PC-3 (cell line): ENCODE measurements at regions of chr2 and their contacts with region 1.

Region 1: DNA sequence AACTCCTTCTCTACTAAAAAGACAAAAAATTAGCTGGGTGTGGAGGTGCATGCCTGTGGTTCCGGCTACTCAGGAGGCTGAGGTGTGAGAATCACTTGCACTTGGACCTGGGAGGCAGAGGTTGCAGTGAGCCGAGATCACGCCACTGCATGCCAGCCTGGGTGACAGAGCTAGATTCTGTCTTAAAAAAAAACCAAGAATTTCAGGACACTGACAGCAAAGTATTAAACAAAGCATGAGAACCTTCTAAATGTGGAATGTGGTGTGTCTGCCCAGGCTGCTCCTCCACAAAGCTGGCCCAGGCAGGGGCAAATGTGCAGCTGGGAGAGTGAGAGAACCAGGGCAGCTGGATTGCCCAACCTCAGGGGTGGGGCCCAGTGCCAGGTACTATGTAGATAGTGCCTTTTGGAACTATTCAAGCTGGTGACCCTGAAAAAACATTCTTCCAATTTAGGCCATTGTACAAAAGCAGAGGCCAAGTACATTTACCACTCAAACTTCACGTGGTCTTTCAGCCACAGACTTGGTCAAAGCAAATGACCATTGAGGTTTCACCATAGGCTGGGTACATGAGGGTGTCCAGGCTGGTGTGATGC is 6.7 kb upstream of the UGT1A5 start:
- DNase-seq: peak; percentile 45
- ATAC-seq: no peak
- H3K4me3 ChIP-seq: no peak overlapping the region
- H3K27ac ChIP-seq: peak overlapping the region; percentile 91
- H3K4me1 ChIP-seq: peaks cover 43% of the 10 kb centered on the region
- H3K27me3 ChIP-seq: no peaks in the 10 kb centered on the region
- CTCF ChIP-seq: no peak

Region 2: GRCh38 chr2:233375490-233376314 is 330.3 kb before region 1 on chr2:
- CTCF ChIA-PET with region 1: no interaction called
- POLR2A ChIA-PET with region 1: no interaction called
- intact Hi-C with region 1: no loop called
- DNase-seq: no peak
- ATAC-seq: no peak
- H3K4me3 ChIP-seq: no peak overlapping the region
- H3K27ac ChIP-seq: no peak overlapping the region
- H3K4me1 ChIP-seq: peaks cover 3% of the 10 kb centered on the region
- H3K27me3 ChIP-seq: no peaks in the 10 kb centered on the region
- CTCF ChIP-seq: no peak

Region 3: GRCh38 chr2:233553366-233553765 is 152.6 kb before region 1 on chr2:
- CTCF ChIA-PET with region 1: no interaction called
- POLR2A ChIA-PET with region 1: no interaction called
- intact Hi-C with region 1: loop called (anchors 5 kb)
- DNase-seq: no peak
- ATAC-seq: no peak
- H3K4me3 ChIP-seq: no peak overlapping the region
- H3K27ac ChIP-seq: no peak overlapping the region
- H3K4me1 ChIP-seq: peaks cover 31% of the 10 kb centered on the region
- H3K27me3 ChIP-seq: no peaks in the 10 kb centered on the region
- CTCF ChIP-seq: no peak

Region 4: DNA sequence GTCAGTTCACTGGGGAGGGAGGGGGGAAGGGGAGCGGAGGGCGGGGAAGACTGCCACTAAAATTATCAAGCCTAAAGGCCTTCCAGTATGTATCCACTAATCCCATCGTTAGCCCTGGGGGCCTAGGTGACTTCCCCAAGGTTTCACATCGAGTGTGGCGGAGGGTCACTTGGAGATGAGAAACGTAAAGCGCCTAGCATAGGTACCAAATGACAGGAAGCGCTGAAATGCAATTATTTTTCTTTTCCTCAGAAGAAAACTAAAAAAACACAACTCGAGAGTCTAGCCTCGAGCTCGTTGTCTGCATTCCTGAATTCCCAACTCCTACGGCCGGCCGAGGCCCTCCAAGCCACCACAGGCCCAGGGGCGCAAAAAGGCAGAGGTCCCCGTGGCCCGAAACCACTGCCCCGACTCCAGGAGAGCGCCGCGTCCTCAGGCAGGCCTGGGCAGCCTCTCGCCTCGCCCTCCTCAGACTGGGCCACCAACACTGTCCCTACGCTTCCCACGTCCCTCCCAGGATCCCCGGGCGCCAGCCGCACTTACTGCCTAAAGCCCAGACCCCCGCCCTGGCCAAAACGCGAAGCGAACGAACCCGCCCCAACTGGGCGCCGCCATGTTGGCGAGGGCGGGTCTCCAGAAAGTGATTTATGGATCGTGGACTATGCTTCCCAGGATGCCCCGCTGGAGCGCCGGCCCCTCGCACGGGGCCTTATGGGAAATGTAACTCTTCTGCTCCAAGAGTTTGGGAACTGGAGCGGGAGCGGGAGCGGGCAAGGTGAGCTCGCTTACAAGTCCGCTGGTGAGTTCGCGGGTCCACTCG is 139.7 kb before region 1 on chr2 and contains the start of gene USP40:
- CTCF ChIA-PET with region 1: no interaction called
- POLR2A ChIA-PET with region 1: no interaction called
- intact Hi-C with region 1: loop called (anchors 5 kb)
- DNase-seq: peak; percentile 91
- ATAC-seq: peak; percentile 97
- H3K4me3 ChIP-seq: peak within 1 kb of the TSS; percentile 95
- H3K27ac ChIP-seq: peak within 1 kb of the TSS; percentile 83
- H3K4me1 ChIP-seq: peaks cover 13% of the 10 kb centered on the region
- H3K27me3 ChIP-seq: no peaks in the 10 kb centered on the region
- CTCF ChIP-seq: no peak
- total RNA-seq, gene USP40: 32.1 and 32.3 TPM in 2 replicates

Region 5: DNA sequence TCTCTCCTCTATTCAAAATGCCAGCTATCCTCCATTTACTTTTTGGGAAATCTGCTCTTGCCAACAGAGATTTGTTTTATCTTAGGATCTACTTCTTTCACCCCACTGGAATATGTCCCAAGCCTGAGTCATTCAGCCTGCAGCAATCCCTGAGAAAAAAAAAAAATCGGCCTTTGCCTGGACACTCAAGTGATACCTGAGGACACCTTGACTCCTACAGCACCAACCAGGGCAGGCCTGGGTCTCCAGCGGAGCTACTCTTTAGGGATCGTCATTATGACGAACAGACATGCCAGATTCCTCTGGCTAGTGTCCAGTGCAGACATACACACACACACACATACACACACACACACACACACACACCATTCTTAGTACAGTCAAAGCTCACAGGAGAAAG is 15.6 kb before region 1 on chr2:
- CTCF ChIA-PET with region 1: no interaction called
- POLR2A ChIA-PET with region 1: interaction called, 9 read pairs
- intact Hi-C with region 1: loop called (anchors 2 kb)
- DNase-seq: peak; percentile 97
- ATAC-seq: peak; percentile 90
- H3K4me3 ChIP-seq: peak overlapping the region; percentile 33
- H3K27ac ChIP-seq: peak overlapping the region; percentile 83
- H3K4me1 ChIP-seq: peaks cover 38% of the 10 kb centered on the region
- H3K27me3 ChIP-seq: no peaks in the 10 kb centered on the region
- CTCF ChIP-seq: no peak

Region 6: DNA sequence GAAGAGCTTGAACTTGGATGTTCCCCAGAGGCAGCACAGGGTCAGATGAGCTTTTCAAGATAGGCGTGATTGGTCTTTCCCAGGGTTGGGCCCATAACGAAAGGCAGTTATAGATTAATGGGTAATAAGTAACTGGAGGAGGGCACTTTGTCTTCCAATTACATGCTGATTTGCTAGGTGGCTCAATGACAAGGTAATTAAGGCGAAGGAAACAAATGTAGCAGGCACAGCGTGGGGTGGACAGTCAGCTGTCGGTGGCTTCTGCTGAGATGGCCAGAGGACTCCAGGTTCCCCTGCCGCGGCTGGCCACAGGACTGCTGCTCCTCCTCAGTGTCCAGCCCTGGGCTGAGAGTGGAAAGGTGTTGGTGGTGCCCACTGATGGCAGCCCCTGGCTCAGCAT is 12.5 kb after region 1 on chr2 and contains the start of gene UGT1A4:
- CTCF ChIA-PET with region 1: no interaction called
- POLR2A ChIA-PET with region 1: no interaction called
- intact Hi-C with region 1: no loop called
- DNase-seq: no peak
- ATAC-seq: no peak
- H3K4me3 ChIP-seq: no peak within 1 kb of the TSS
- H3K27ac ChIP-seq: no peak within 1 kb of the TSS
- H3K4me1 ChIP-seq: no peaks in the 10 kb centered on the region
- H3K27me3 ChIP-seq: no peaks in the 10 kb centered on the region
- CTCF ChIP-seq: no peak
- total RNA-seq, gene UGT1A4: not detected in 2 replicates

Region 7: DNA sequence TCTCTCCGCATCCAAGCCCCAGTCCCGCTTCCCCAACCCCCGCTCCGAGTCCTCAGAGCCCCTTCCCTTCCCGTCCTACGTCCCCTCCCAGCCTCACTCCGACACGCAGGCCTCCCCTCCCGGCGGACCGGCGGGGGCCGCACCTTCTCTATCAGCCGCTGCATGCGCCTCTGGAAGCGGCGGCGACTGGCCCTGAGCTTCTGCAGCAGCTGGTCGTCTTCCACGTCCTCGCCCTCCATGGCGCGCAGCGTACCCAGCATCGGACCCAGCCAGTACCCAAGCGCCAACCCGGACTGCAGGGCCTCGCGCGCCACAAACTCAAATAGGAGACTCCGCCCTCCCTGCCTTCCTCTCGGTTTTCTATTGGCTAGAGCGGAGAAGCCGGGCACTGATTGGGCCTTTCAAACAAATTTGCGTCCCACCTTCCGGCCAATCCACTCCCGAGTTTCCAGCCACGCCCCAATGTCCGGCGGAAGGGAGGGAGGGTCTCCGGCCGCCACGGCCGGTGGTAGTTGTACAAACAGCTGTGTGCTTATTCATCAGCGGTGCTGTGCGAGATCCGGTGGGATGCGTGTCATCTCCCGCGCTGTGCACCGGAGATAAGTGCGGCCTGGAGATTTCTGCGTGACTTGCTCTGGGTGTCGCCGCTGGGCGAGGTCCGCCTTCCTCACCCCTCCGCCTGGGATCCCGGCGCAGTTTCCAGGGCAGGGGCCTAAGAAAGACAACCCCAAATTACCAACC is 148.4 kb after region 1 on chr2 and contains the start of gene HJURP:
- CTCF ChIA-PET with region 1: no interaction called
- POLR2A ChIA-PET with region 1: no interaction called
- intact Hi-C with region 1: loop called (anchors 5 kb)
- DNase-seq: peak; percentile 97
- ATAC-seq: peak; percentile 88
- H3K4me3 ChIP-seq: peak within 1 kb of the TSS; percentile 98
- H3K27ac ChIP-seq: peak within 1 kb of the TSS; percentile 66
- H3K4me1 ChIP-seq: peaks cover 26% of the 10 kb centered on the region
- H3K27me3 ChIP-seq: no peaks in the 10 kb centered on the region
- CTCF ChIP-seq: no peak
- total RNA-seq, gene HJURP: 31.7 and 37.0 TPM in 2 replicates